ENCODE measurements at regions of chr5 and their contacts with region 1.

Region 1: DNA sequence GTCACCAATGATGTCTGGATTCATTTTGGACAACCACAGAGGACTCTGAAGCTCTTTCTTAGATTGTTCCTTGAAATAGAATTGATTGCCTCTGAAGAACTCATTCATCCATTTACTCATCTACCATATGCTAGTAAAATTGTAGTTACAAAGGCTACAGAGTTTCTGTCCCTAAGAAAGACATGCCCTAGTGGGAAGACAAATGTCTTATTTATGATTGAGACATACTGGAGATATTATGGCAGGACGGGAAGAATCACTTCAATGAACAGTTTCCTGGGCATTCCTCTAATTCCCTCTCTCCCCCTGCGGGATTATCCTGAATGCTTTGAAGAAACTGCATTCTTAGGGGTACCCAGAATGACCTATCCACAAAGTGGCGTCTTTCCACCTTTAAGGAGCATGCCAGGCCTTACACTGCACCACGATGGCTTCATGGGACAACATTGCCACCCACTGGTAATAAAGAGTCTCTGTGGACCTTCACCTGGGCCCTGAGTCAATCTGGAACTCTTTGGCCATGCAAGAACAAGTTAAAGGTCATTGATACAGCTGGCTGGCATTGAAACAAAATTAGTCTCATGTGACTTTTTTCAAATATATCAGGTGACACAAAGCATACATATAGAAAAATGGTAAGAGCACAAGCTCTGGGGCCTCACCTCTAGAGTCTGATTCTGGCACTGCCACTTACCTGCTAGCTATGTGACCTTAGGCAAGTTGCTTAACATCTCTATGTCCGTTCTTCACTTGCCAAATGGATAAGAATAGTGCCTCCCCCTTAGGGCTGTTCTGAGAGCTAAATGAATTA is 32.1 kb downstream of the ANKRD55 start:
- DNase-seq: peak; percentile 80
- H3K27ac ChIP-seq: no peak overlapping the region
- CTCF ChIP-seq: peak; percentile 76

Region 2: DNA sequence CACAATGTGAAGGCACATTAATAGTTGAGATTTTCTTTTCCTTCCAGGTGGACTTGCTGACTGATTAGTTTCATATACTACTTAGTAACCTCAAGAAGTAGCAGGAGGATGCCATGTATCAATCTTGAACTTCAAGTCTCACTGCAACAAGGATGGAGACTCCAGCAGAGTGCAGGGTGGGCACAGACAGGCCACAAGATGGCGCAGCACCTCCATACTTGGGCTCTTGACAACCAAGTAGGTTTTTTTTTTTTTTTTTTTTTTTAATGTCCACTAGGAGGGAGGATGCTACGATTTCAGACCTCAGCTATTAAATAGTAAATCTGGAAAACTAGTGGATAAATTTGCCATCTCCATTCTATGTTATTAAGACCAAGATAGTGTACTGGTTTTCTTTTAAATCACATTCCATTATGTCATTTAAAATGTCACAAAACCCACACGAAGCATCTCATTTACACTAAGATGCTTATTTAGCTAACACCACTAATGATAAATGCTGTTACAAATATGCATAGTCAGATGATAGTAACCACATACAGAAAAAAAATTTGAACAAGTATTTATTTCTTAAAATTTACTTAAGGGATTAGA is 264.9 kb before region 1 on chr5:
- CTCF ChIA-PET with region 1: interaction called, 47 read pairs
- POLR2A ChIA-PET with region 1: no interaction called
- DNase-seq: peak; percentile 84
- H3K27ac ChIP-seq: no peak overlapping the region
- CTCF ChIP-seq: peak; percentile 98

Region 3: DNA sequence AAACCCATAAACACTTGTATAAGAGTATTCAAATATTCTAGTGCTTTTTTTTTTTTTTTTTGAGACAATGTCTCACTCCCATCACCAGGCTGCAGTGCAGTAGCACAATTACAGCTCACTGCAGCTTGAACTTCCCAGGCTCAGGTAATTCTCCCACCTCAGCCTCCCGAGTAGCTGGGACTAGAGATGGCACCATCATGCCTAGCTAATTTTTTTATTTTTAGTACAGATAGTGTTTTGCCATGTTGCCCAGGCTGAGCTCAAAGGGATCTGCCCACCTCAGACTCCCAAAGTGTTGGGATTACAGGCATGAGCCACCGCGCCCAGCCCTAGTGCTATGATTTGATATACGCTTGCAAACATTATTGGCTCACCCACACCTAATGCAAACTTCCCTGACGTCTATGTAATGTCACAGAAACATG is 218.1 kb before region 1 on chr5:
- CTCF ChIA-PET with region 1: interaction called, 11 read pairs
- POLR2A ChIA-PET with region 1: no interaction called
- DNase-seq: no peak
- H3K27ac ChIP-seq: no peak overlapping the region
- CTCF ChIP-seq: no peak

Region 4: DNA sequence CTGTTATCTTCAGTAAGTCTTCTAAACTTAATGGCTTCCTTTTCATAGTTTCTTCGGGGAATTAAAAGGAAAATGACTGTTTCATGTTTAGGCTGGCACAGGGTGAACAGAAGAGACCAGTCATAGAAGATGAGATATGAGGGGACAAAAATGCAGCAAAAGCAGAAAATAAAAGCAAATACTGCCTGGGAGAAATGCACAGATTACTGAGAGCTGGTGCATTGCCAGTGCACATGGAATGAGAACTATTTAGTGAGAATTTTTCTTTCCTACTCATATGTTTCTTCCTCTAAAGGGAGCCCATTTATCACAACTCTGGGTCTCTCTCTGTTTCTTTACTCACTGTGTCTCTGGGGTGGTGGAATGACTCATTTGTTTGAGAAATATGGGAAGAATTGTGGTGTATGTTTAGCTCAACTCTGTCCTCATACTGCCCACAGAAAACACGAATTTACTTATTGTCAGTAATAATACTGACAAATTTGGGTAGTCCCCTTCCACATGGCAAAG is 58.0 kb after region 1 on chr5:
- CTCF ChIA-PET with region 1: no interaction called
- POLR2A ChIA-PET with region 1: no interaction called
- DNase-seq: peak; percentile 37
- H3K27ac ChIP-seq: no peak overlapping the region
- CTCF ChIP-seq: no peak